PC-3 (cell line): ENCODE measurements at regions of chr10 and their contacts with region 1.

Region 1: DNA sequence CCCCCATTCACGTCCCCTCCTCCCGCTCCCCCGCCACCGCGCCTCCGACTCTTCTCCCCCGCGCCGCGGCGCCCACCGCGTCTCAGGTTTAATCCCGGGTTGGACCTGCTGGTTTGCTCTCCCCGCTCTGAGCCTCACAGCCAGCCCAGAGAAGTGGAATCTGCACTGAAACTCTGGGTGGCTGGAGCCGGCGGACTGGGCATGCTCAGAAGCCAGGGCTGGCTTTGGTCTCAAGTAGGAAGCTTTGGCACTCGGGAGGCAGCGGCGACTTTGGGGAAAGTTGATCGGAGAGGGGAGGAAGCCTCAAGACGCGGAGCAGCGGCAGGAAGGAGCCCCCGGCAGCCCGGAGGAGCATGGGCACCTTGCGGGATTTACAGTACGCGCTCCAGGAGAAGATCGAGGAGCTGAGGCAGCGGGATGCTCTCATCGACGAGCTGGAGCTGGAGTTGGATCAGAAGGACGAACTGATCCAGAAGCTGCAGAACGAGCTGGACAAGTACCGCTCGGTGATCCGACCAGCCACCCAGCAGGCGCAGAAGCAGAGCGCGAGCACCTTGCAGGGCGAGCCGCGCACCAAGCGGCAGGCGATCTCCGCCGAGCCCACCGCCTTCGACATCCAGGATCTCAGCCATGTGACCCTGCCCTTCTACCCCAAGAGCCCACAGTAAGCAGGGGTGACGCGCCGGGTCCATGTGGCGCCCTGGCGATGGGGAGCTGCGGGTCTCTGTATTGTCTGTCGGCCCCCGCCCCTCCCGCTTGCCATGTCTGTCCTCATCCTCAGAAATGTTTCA is at the start of gene PRKG1:
- DNase-seq: peak; percentile 97
- ATAC-seq: peak; percentile 86
- H3K4me3 ChIP-seq: peak within 1 kb of the TSS; percentile 72
- H3K27ac ChIP-seq: peak within 1 kb of the TSS; percentile 10
- H3K4me1 ChIP-seq: peaks cover 21% of the 10 kb centered on the region
- H3K27me3 ChIP-seq: no peaks in the 10 kb centered on the region
- CTCF ChIP-seq: no peak
- total RNA-seq, gene PRKG1: 6.3 and 7.4 TPM in 2 replicates

Region 2: GRCh38 chr10:50972591-50972990 is 101.8 kb before region 1 on chr10:
- CTCF ChIA-PET with region 1: no interaction called
- POLR2A ChIA-PET with region 1: no interaction called
- intact Hi-C with region 1: no loop called
- DNase-seq: no peak
- ATAC-seq: no peak
- H3K4me3 ChIP-seq: no peak overlapping the region
- H3K27ac ChIP-seq: no peak overlapping the region
- H3K4me1 ChIP-seq: no peaks in the 10 kb centered on the region
- H3K27me3 ChIP-seq: peaks cover 51% of the 10 kb centered on the region
- CTCF ChIP-seq: no peak

Region 3: DNA sequence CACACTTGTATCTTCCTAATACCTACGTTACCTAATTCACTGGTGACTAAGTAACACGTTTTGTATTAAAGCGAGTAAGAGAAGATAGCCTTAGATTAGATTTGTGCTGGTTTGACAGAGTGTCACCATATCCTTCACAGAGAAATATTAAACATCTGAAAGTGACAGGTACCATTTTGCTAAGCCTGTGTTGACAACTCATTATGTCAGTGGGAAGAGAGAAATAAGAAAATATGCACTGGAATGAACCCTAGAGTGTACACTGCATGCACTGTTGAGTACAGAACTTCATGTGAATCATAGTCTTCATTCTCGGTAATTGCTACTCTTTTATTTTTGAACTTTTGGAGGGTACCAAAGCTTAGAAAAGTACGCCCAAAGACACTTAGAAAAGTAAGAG is 10.8 kb after region 1 on chr10:
- CTCF ChIA-PET with region 1: no interaction called
- POLR2A ChIA-PET with region 1: interaction called, 4 read pairs
- intact Hi-C with region 1: loop called (anchors 1 kb)
- DNase-seq: no peak
- ATAC-seq: no peak
- H3K4me3 ChIP-seq: no peak overlapping the region
- H3K27ac ChIP-seq: no peak overlapping the region
- H3K4me1 ChIP-seq: peaks cover 5% of the 10 kb centered on the region
- H3K27me3 ChIP-seq: no peaks in the 10 kb centered on the region
- CTCF ChIP-seq: no peak

Region 4: DNA sequence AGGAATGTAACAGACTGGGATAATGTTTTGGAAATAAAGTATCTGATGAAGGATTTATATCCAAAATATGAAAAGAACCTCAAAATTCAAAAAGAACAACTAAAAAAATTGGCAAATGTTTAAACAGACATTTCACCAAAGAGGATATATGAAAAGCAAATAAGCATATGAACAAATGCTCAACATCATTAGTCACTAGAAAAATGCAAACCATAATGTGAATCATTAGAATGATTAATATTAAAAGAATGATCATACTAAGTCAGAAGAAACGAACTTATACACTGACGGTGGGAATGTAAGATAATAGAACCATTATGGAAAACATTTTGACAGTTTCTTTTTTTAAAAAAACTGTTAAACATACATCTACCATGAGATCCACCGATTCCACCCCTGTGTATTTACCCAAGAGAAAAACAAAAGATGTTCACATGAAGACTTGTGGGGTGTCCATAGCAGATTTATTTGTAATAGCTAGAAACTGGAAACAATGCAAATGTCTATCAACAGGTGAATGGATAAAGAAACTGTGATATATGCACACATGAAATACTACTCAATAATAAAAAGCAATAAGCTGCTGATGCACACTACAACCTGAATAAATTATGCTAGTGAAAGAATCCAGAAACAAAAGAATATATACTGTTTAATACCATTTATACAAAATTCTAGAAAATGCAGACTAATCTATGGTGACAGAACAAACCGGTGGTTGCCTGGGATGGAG is 35.5 kb after region 1 on chr10:
- CTCF ChIA-PET with region 1: no interaction called
- POLR2A ChIA-PET with region 1: interaction called, 3 read pairs
- intact Hi-C with region 1: loop called (anchors 1 kb)
- DNase-seq: peak; percentile 99
- ATAC-seq: peak; percentile 90
- H3K4me3 ChIP-seq: peak overlapping the region; percentile 49
- H3K27ac ChIP-seq: peak overlapping the region; percentile 82
- H3K4me1 ChIP-seq: peaks cover 39% of the 10 kb centered on the region
- H3K27me3 ChIP-seq: no peaks in the 10 kb centered on the region
- CTCF ChIP-seq: no peak

Region 5: GRCh38 chr10:51196508-51197175 is 122.2 kb after region 1 on chr10:
- CTCF ChIA-PET with region 1: interaction called, 3 read pairs
- POLR2A ChIA-PET with region 1: interaction called, 3 read pairs
- intact Hi-C with region 1: loop called (anchors 1 kb)
- DNase-seq: peak; percentile 81
- ATAC-seq: peak; percentile 92
- H3K4me3 ChIP-seq: no peak overlapping the region
- H3K27ac ChIP-seq: no peak overlapping the region
- H3K4me1 ChIP-seq: peaks cover 21% of the 10 kb centered on the region
- H3K27me3 ChIP-seq: no peaks in the 10 kb centered on the region
- CTCF ChIP-seq: no peak

Region 6: GRCh38 chr10:51340845-51341610 is 266.6 kb after region 1 on chr10:
- CTCF ChIA-PET with region 1: no interaction called
- POLR2A ChIA-PET with region 1: no interaction called
- intact Hi-C with region 1: loop called (anchors 1 kb)
- DNase-seq: peak; percentile 91
- ATAC-seq: peak; percentile 100
- H3K4me3 ChIP-seq: no peak overlapping the region
- H3K27ac ChIP-seq: peak overlapping the region; percentile 4
- H3K4me1 ChIP-seq: peaks cover 15% of the 10 kb centered on the region
- H3K27me3 ChIP-seq: no peaks in the 10 kb centered on the region
- CTCF ChIP-seq: no peak

Region 7: GRCh38 chr10:51422311-51423120 is 348.1 kb after region 1 on chr10:
- CTCF ChIA-PET with region 1: interaction called, 4 read pairs
- POLR2A ChIA-PET with region 1: no interaction called
- intact Hi-C with region 1: loop called (anchors 1 kb)
- DNase-seq: peak; percentile 95
- ATAC-seq: peak; percentile 95
- H3K4me3 ChIP-seq: no peak overlapping the region
- H3K27ac ChIP-seq: no peak overlapping the region
- H3K4me1 ChIP-seq: no peaks in the 10 kb centered on the region; the same call in 1 of the 2 replicates
- H3K27me3 ChIP-seq: no peaks in the 10 kb centered on the region
- CTCF ChIP-seq: peak; percentile 100